ENCODE measurements at regions of chr16 and their contacts with region 1.

Region 1: GRCh38 chr16:57185944-57186871 is at the starts of genes PSME3IP1 and RSPRY1:
- DNase-seq: peak; percentile 99
- H3K4me3 Mint-ChIP-seq: peak within 1 kb of the TSS; percentile 96
- H3K27ac Mint-ChIP-seq: peak within 1 kb of the TSS; percentile 98
- H3K4me1 Mint-ChIP-seq: peaks cover 44% of the 10 kb centered on the region
- H3K27me3 Mint-ChIP-seq: no peaks in the 10 kb centered on the region
- total RNA-seq, gene PSME3IP1: 116 and 124 TPM in 2 replicates
- total RNA-seq, gene RSPRY1: 36.0 and 36.5 TPM in 2 replicates

Region 2: GRCh38 chr16:56729735-56730662 is 456.2 kb before region 1 on chr16 and contains the start of gene NUP93:
- intact Hi-C with region 1: loop called (anchors 10 kb)
- DNase-seq: peak; percentile 87
- H3K4me3 Mint-ChIP-seq: no peak within 1 kb of the TSS
- H3K27ac Mint-ChIP-seq: peak within 1 kb of the TSS; percentile 88
- H3K4me1 Mint-ChIP-seq: peaks cover 13% of the 10 kb centered on the region
- H3K27me3 Mint-ChIP-seq: peaks cover 2% of the 10 kb centered on the region
- total RNA-seq, gene NUP93: 150 and 152 TPM in 2 replicates

Region 3: GRCh38 chr16:56938422-56939156 is 247.6 kb before region 1 on chr16:
- intact Hi-C with region 1: loop called (anchors 2 kb)
- DNase-seq: peak; percentile 48
- H3K4me3 Mint-ChIP-seq: peak overlapping the region; percentile 85
- H3K27ac Mint-ChIP-seq: peak overlapping the region; percentile 97
- H3K4me1 Mint-ChIP-seq: peaks cover 81% of the 10 kb centered on the region
- H3K27me3 Mint-ChIP-seq: no peaks in the 10 kb centered on the region

Region 4: DNA sequence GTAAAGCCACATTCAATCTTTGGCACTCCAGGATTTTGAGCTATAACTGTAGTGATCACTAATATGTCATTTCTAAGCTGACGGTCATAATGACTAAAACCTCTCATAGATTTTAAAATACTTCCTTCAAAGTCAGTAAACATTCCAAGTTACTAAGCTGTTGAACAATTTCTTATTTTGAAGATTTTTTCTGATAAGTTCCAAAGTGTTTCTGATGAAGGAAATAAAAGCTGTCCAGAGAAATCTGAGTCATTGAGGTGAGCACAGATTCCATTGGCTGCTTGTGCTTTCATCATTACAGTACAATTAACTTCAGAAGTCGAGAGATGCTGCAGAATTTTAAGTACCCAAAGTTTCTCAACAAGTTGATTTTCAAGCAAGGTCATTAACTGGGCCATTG is 173.0 kb before region 1 on chr16:
- intact Hi-C with region 1: loop called (anchors 1 kb)
- DNase-seq: no peak
- H3K4me3 Mint-ChIP-seq: peak overlapping the region; percentile 50
- H3K27ac Mint-ChIP-seq: peak overlapping the region; percentile 81
- H3K4me1 Mint-ChIP-seq: peaks cover 80% of the 10 kb centered on the region
- H3K27me3 Mint-ChIP-seq: no peaks in the 10 kb centered on the region

Region 5: GRCh38 chr16:57244767-57245471 is 58.7 kb after region 1 on chr16 and contains the start of gene ARL2BP:
- intact Hi-C with region 1: loop called (anchors 1 kb)
- DNase-seq: peak; percentile 98
- H3K4me3 Mint-ChIP-seq: peak within 1 kb of the TSS; percentile 90
- H3K27ac Mint-ChIP-seq: peak within 1 kb of the TSS; percentile 82
- H3K4me1 Mint-ChIP-seq: peaks cover 18% of the 10 kb centered on the region
- H3K27me3 Mint-ChIP-seq: no peaks in the 10 kb centered on the region
- total RNA-seq, gene ARL2BP: 29.1 and 29.7 TPM in 2 replicates

Region 6: GRCh38 chr16:57447186-57447962 is 261.2 kb after region 1 on chr16 and contains the starts of genes CIAPIN1 and COQ9:
- intact Hi-C with region 1: loop called (anchors 1 kb)
- DNase-seq: peak; percentile 90
- H3K4me3 Mint-ChIP-seq: peak within 1 kb of the TSS; percentile 94
- H3K27ac Mint-ChIP-seq: peak within 1 kb of the TSS; percentile 90
- H3K4me1 Mint-ChIP-seq: peaks cover 37% of the 10 kb centered on the region
- H3K27me3 Mint-ChIP-seq: no peaks in the 10 kb centered on the region
- total RNA-seq, gene CIAPIN1: 98.0 and 98.4 TPM in 2 replicates
- total RNA-seq, gene COQ9: 51.2 and 51.6 TPM in 2 replicates

Region 7: GRCh38 chr16:57535680-57536305 is 349.6 kb after region 1 on chr16:
- intact Hi-C with region 1: loop called (anchors 5 kb)
- DNase-seq: peak; percentile 92
- H3K4me3 Mint-ChIP-seq: peak overlapping the region; percentile 78
- H3K27ac Mint-ChIP-seq: peak overlapping the region; percentile 93
- H3K4me1 Mint-ChIP-seq: peaks cover 62% of the 10 kb centered on the region
- H3K27me3 Mint-ChIP-seq: no peaks in the 10 kb centered on the region